ENCODE measurements at regions of chr7 and their contacts with region 1.

Region 1: GRCh38 chr7:74173866-74174605 is at the start of gene EIF4H:
- DNase-seq: peak; percentile 89
- H3K4me3 Mint-ChIP-seq: peak within 1 kb of the TSS; percentile 87
- H3K27ac Mint-ChIP-seq: peak within 1 kb of the TSS; percentile 92
- H3K4me1 Mint-ChIP-seq: peaks cover 29% of the 10 kb centered on the region
- H3K27me3 Mint-ChIP-seq: no peaks in the 10 kb centered on the region
- CTCF ChIP-seq: no peak
- total RNA-seq, gene EIF4H: 365 and 420 TPM in 2 replicates

Region 2: DNA sequence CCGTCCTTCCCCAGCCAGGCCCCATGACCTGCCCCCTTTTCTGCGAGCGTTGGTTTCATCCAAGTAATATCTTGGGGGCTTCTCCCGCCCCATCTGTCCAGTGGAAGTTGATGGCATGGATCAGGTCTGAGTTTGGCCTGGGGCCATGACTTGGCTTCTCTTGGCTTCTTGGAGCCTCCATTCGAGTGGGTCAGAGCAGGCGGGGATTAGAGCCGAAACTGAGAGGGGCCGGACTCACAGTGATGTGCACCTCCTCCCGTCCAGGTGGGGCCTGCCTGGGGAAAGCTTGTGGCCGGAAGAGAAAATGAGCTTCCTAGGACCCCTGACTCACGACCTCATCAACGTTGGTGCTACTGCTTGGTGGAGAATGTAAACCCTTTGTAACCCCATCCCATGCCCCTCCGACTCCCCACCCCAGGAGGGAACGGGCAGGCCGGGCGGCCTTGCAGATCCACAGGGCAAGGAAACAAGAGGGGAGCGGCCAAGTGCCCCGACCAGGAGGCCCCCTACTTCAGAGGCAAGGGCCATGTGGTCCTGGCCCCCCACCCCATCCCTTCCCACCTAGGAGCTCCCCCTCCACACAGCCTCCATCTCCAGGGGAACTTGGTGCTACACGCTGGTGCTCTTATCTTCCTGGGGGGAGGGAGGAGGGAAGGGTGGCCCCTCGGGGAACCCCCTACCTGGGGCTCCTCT is 105.5 kb before region 1 on chr7:
- CTCF ChIA-PET with region 1: interaction called, 16 read pairs
- POLR2A ChIA-PET with region 1: interaction called, 8 read pairs
- intact Hi-C with region 1: loop called (anchors 2 kb)
- DNase-seq: no peak
- H3K4me3 Mint-ChIP-seq: no peak overlapping the region
- H3K27ac Mint-ChIP-seq: no peak overlapping the region
- H3K4me1 Mint-ChIP-seq: no peaks in the 10 kb centered on the region
- H3K27me3 Mint-ChIP-seq: no peaks in the 10 kb centered on the region
- CTCF ChIP-seq: no peak

Region 3: GRCh38 chr7:74083117-74083876 is 90.7 kb before region 1 on chr7 and contains the start of gene LIMK1:
- CTCF ChIA-PET with region 1: interaction called, 3 read pairs
- POLR2A ChIA-PET with region 1: interaction called, 27 read pairs
- intact Hi-C with region 1: loop called (anchors 5 kb)
- DNase-seq: peak; percentile 68
- H3K4me3 Mint-ChIP-seq: peak within 1 kb of the TSS; percentile 78
- H3K27ac Mint-ChIP-seq: peak within 1 kb of the TSS; percentile 89
- H3K4me1 Mint-ChIP-seq: peaks cover 21% of the 10 kb centered on the region
- H3K27me3 Mint-ChIP-seq: no peaks in the 10 kb centered on the region
- CTCF ChIP-seq: no peak
- total RNA-seq, gene LIMK1: 21.4 and 23.4 TPM in 2 replicates

Region 4: DNA sequence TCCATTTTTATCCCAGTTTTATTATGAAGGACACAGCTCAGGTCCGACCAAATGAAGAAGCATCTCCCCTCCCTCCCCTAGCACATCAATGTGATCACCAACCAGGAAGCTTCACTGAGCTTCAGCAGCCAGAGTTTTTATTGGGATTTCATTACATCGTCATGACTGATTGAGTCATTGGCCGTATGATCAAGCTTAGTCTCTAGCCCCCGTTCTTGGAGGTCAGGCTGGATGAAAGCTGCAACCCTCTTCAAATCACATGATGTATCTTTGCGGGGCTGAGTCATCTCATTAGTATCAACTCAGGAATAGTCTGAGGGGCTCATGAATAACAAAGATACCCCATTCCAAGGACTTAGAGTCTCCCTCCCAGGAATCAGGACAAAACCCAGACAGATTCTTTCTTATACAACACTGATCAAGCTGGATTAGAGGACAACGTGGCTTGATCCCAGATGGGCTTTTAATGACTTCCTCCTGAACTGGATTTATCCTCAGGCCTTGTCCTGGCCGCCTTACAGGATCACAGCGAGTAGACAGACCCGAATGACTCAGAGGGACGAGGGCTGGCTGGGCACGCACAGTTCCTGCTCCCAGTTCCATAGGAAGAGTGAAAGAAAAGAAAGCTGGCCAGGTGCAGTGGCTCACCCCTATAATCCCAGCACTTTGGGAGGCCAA is 76.0 kb before region 1 on chr7:
- CTCF ChIA-PET with region 1: interaction called, 5 read pairs
- POLR2A ChIA-PET with region 1: interaction called, 12 read pairs
- intact Hi-C with region 1: no loop called
- DNase-seq: peak; percentile 88
- H3K4me3 Mint-ChIP-seq: peak overlapping the region; percentile 7
- H3K27ac Mint-ChIP-seq: peak overlapping the region; percentile 88
- H3K4me1 Mint-ChIP-seq: peaks cover 19% of the 10 kb centered on the region
- H3K27me3 Mint-ChIP-seq: no peaks in the 10 kb centered on the region
- CTCF ChIP-seq: no peak

Region 5: GRCh38 chr7:74193054-74193453 is 19.0 kb after region 1 on chr7:
- CTCF ChIA-PET with region 1: interaction called, 3 read pairs
- POLR2A ChIA-PET with region 1: interaction called, 10 read pairs
- intact Hi-C with region 1: no loop called
- DNase-seq: no peak
- H3K4me3 Mint-ChIP-seq: no peak overlapping the region
- H3K27ac Mint-ChIP-seq: no peak overlapping the region
- H3K4me1 Mint-ChIP-seq: peaks cover 3% of the 10 kb centered on the region
- H3K27me3 Mint-ChIP-seq: no peaks in the 10 kb centered on the region
- CTCF ChIP-seq: no peak

Region 6: GRCh38 chr7:74199551-74200242 is 25.7 kb after region 1 on chr7:
- CTCF ChIA-PET with region 1: interaction called, 3 read pairs
- POLR2A ChIA-PET with region 1: interaction called, 10 read pairs
- intact Hi-C with region 1: no loop called
- DNase-seq: peak; percentile 46
- H3K4me3 Mint-ChIP-seq: no peak overlapping the region
- H3K27ac Mint-ChIP-seq: no peak overlapping the region
- H3K4me1 Mint-ChIP-seq: no peaks in the 10 kb centered on the region
- H3K27me3 Mint-ChIP-seq: no peaks in the 10 kb centered on the region
- CTCF ChIP-seq: no peak

Measured in MCF 10A (cell line).